Left ventricle myocardium inferior (tissue), 1 donor: ENCODE measurements at regions of chr1 and their contacts with region 1.

Region 1: GRCh38 chr1:169601093-169601881 is 15.0 kb upstream of the F5 start:
- DNase-seq: no peak
- H3K4me3 ChIP-seq: no peak overlapping the region
- H3K27ac ChIP-seq: no peak overlapping the region
- H3K4me1 ChIP-seq: no peaks in the 10 kb centered on the region
- H3K27me3 ChIP-seq: no peaks in the 10 kb centered on the region
- CTCF ChIP-seq: peak; percentile 64

Region 2: GRCh38 chr1:169529068-169529696 is 72.1 kb before region 1 on chr1:
- intact Hi-C with region 1: no loop called
- DNase-seq: no peak
- H3K4me3 ChIP-seq: no peak overlapping the region
- H3K27ac ChIP-seq: no peak overlapping the region
- H3K4me1 ChIP-seq: peaks cover 5% of the 10 kb centered on the region
- H3K27me3 ChIP-seq: no peaks in the 10 kb centered on the region
- CTCF ChIP-seq: no peak

Region 3: GRCh38 chr1:169563650-169564049 is 37.6 kb before region 1 on chr1:
- intact Hi-C with region 1: no loop called
- DNase-seq: no peak
- H3K4me3 ChIP-seq: no peak overlapping the region
- H3K27ac ChIP-seq: no peak overlapping the region
- H3K4me1 ChIP-seq: no peaks in the 10 kb centered on the region
- H3K27me3 ChIP-seq: no peaks in the 10 kb centered on the region
- CTCF ChIP-seq: no peak

Region 4: GRCh38 chr1:169711469-169712281 is 110.4 kb after region 1 on chr1 and contains the start of gene SELL:
- intact Hi-C with region 1: loop called (anchors 5 kb)
- DNase-seq: peak; percentile 18
- H3K4me3 ChIP-seq: peak within 1 kb of the TSS; percentile 45
- H3K27ac ChIP-seq: peak within 1 kb of the TSS; percentile 31
- H3K4me1 ChIP-seq: no peaks in the 10 kb centered on the region
- H3K27me3 ChIP-seq: peaks cover 11% of the 10 kb centered on the region
- CTCF ChIP-seq: peak; percentile 86
- total RNA-seq, gene SELL: 1.2 TPM

Region 5: GRCh38 chr1:169809370-169810095 is 208.2 kb after region 1 on chr1:
- intact Hi-C with region 1: loop called (anchors 10 kb)
- DNase-seq: no peak
- H3K4me3 ChIP-seq: no peak overlapping the region
- H3K27ac ChIP-seq: no peak overlapping the region
- H3K4me1 ChIP-seq: no peaks in the 10 kb centered on the region
- H3K27me3 ChIP-seq: no peaks in the 10 kb centered on the region
- CTCF ChIP-seq: peak; percentile 67

Region 6: GRCh38 chr1:169989246-169989645 is 388.0 kb after region 1 on chr1:
- intact Hi-C with region 1: no loop called
- DNase-seq: no peak
- H3K4me3 ChIP-seq: no peak overlapping the region
- H3K27ac ChIP-seq: no peak overlapping the region
- H3K4me1 ChIP-seq: no peaks in the 10 kb centered on the region
- H3K27me3 ChIP-seq: no peaks in the 10 kb centered on the region
- CTCF ChIP-seq: no peak